A673 (cell line): ENCODE measurements at regions of chr3 and their contacts with region 1.

Region 1: DNA sequence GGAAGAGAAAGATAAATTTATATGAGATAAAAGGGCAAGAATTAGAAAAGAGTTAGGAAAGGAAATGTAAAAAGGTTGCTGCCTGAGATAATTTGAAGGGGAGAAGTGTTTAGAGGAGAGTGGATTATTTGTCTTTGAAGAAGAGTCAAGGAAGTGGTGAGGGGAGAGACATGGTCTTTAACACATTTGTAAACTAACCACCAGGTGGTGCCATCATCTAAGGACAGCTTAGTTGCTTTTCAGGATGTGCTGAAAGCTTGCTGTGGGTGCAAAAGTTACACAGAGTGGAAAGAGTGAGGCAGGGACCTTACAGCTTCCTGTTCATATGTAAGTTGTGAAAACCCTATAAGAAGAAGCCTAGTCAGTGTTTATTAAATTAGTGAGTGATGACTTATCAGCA is 114.1 kb upstream of the DNAJC19 start:
- DNase-seq: peak; percentile 44
- H3K4me3 ChIP-seq: no peak overlapping the region
- H3K27ac ChIP-seq: no peak overlapping the region
- H3K4me1 ChIP-seq: no peaks in the 10 kb centered on the region
- H3K27me3 ChIP-seq: no peaks in the 10 kb centered on the region
- CTCF ChIP-seq: peak; percentile 45; the same call in 1 of the 2 replicates

Region 2: DNA sequence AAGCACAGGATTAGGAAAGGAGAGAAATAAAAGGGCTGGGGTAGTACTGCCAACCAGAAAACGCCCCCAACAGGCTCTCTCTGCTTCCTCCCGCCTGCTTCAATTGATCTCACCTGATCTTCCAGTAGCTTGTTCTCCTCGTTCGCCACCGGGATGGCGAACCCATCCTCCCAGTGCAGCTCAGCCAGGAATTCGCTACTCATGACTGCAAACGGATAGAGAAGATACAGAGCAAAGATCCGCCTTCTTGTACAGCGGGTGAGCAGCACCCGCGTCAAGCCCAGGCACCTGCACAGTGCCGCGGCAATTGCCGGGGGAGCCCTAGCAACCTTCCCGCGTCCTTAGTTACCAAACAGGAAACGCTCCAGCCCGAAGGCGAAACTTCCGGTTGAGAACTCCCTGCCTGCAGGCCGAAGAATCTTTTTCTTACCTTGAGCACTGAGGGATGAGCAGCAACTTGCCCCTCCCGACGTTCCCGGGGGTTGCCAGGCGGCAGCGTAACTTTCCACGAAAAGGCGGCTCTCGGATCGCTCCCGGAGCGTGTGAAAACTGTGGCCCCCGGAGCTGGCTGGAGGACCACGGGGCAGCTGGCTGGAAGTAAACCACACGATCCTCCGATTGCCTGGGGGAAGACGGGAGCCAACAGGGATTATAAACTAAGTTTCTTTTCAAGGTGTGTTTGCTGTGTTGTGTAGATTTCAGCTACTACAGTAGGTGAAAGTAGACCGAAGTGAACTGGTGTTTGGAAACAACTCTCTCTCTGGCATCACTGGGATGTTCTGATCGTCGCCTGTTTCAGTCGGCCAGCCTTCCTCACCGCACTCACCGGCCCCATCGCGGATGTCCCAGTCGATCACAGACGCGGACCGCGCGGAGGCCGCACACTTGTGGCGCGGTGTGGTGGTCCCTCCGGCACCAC is 424.2 kb before region 1 on chr3 and contains the start of gene CCDC39:
- CTCF ChIA-PET with region 1: no interaction called
- POLR2A ChIA-PET with region 1: interaction called, 24 read pairs
- intact Hi-C with region 1: no loop called
- DNase-seq: peak; percentile 69
- H3K4me3 ChIP-seq: peak within 1 kb of the TSS; percentile 59
- H3K27ac ChIP-seq: no peak within 1 kb of the TSS
- H3K4me1 ChIP-seq: peaks cover 4% of the 10 kb centered on the region
- H3K27me3 ChIP-seq: peaks cover 57% of the 10 kb centered on the region
- CTCF ChIP-seq: no peak
- total RNA-seq, gene CCDC39: not detected in 2 replicates

Region 3: GRCh38 chr3:181752202-181752671 is 648.6 kb after region 1 on chr3:
- CTCF ChIA-PET with region 1: no interaction called
- POLR2A ChIA-PET with region 1: no interaction called
- intact Hi-C with region 1: no loop called
- DNase-seq: no peak
- H3K4me3 ChIP-seq: no peak overlapping the region
- H3K27ac ChIP-seq: no peak overlapping the region
- H3K4me1 ChIP-seq: peaks cover 19% of the 10 kb centered on the region
- H3K27me3 ChIP-seq: no peaks in the 10 kb centered on the region
- CTCF ChIP-seq: no peak